Activated T-helper 1 cell treated with anti-CD3 and anti-CD28 coated beads, Interleukin-12 subunit alpha, Interleukin-12 subunit beta, Interleukin-2, Interleukin-4 antibody, amounts not matched to agents 30 ng/mL and 10 ng/mL and 1 ng/mL, durations not matched to agents 14 hours and 24 hours and 36 hours (primary cell): ENCODE measurements at regions of chr1 and their contacts with region 1.

Region 1: GRCh38 chr1:119647734-119648619 is at the start of gene ZNF697:
- DNase-seq: peak; percentile 28
- H3K4me3 Mint-ChIP-seq: peak within 1 kb of the TSS; percentile 82
- H3K27ac Mint-ChIP-seq: no peak within 1 kb of the TSS
- H3K4me1 Mint-ChIP-seq: peaks cover 23% of the 10 kb centered on the region
- H3K27me3 Mint-ChIP-seq: peaks cover 58% of the 10 kb centered on the region
- total RNA-seq, gene ZNF697: 2.9 and 3.0 TPM in 2 replicates

Region 2: GRCh38 chr1:119482531-119483425 is 165.2 kb before region 1 on chr1:
- intact Hi-C with region 1: no loop called
- DNase-seq: no peak
- H3K4me3 Mint-ChIP-seq: no peak overlapping the region
- H3K27ac Mint-ChIP-seq: no peak overlapping the region
- H3K4me1 Mint-ChIP-seq: no peaks in the 10 kb centered on the region
- H3K27me3 Mint-ChIP-seq: peaks cover 7% of the 10 kb centered on the region

Region 3: GRCh38 chr1:119662034-119662437 is 14.1 kb after region 1 on chr1:
- intact Hi-C with region 1: no loop called
- DNase-seq: no peak
- H3K4me3 Mint-ChIP-seq: no peak overlapping the region
- H3K27ac Mint-ChIP-seq: no peak overlapping the region
- H3K4me1 Mint-ChIP-seq: peaks cover 12% of the 10 kb centered on the region
- H3K27me3 Mint-ChIP-seq: peaks cover 21% of the 10 kb centered on the region

Region 4: GRCh38 chr1:119700326-119700725 is 52.3 kb after region 1 on chr1:
- intact Hi-C with region 1: no loop called
- DNase-seq: no peak
- H3K4me3 Mint-ChIP-seq: no peak overlapping the region
- H3K27ac Mint-ChIP-seq: no peak overlapping the region
- H3K4me1 Mint-ChIP-seq: no peaks in the 10 kb centered on the region
- H3K27me3 Mint-ChIP-seq: peaks cover 6% of the 10 kb centered on the region

Region 5: DNA sequence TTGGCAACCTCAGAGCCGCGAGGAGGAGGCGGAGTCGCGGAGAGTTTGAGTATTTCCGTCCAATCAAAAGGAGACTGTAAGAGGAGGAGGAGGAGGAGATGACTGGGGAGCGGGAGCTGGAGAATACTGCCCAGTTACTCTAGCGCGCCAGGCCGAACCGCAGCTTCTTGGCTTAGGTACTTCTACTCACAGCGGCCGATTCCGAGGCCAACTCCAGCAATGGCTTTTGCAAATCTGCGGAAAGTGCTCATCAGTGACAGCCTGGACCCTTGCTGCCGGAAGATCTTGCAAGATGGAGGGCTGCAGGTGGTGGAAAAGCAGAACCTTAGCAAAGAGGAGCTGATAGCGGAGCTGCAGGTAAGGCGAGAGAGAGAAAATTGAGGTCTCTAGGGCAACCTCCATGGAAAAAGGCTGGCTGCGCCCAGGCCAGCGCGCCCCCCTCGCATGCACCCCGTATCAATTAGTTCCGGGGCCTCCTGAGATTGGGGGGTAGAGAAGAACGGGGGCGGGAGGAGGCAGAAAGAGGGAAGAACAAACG is 63.9 kb after region 1 on chr1 and contains the start of gene PHGDH:
- intact Hi-C with region 1: loop called (anchors 5 kb)
- DNase-seq: peak; percentile 59
- H3K4me3 Mint-ChIP-seq: peak within 1 kb of the TSS; percentile 94
- H3K27ac Mint-ChIP-seq: peak within 1 kb of the TSS; percentile 80
- H3K4me1 Mint-ChIP-seq: peaks cover 42% of the 10 kb centered on the region
- H3K27me3 Mint-ChIP-seq: peaks cover 30% of the 10 kb centered on the region
- total RNA-seq, gene PHGDH: 46.7 and 49.3 TPM in 2 replicates